ENCODE measurements at regions of chr4 and their contacts with region 1.

Region 1: GRCh38 chr4:41857226-41857641 is 78.0 kb upstream of the TMEM33 start:
- DNase-seq: peak; percentile 69
- H3K4me3 ChIP-seq: no peak overlapping the region
- H3K27ac ChIP-seq: peak overlapping the region in 1 of 2 experiments; percentile 100; a peak in 2 of 4 replicates
- H3K4me1 ChIP-seq: peaks cover 0 to 27% of the 10 kb centered on the region in 2 experiments; a peak in 2 of 4 replicates
- H3K27me3 ChIP-seq: peaks cover 14% of the 10 kb centered on the region; the same call in 1 of the 2 replicates
- CTCF ChIP-seq: no peak
- EP300 ChIP-seq: peak; percentile 4 to 98; a peak in 3 of 4 replicates
- RAD21 ChIP-seq: peak; percentile 32

Region 2: GRCh38 chr4:41784191-41784979 is 72.8 kb before region 1 on chr4:
- CTCF ChIA-PET with region 1: interaction called, 3 read pairs
- POLR2A ChIA-PET with region 1: interaction called, 10 read pairs
- DNase-seq: peak; percentile 62
- H3K4me3 ChIP-seq: no peak overlapping the region; a peak in 1 of 4 replicates
- H3K27ac ChIP-seq: peak overlapping the region in 1 of 2 experiments; percentile 98; a peak in 2 of 4 replicates
- H3K4me1 ChIP-seq: peaks cover 0 to 24% of the 10 kb centered on the region in 2 experiments; a peak in 2 of 4 replicates
- H3K27me3 ChIP-seq: no peaks in the 10 kb centered on the region
- CTCF ChIP-seq: no peak
- EP300 ChIP-seq: peak in 1 of 2 experiments; percentile 83; a peak in 2 of 4 replicates
- RAD21 ChIP-seq: no peak

Region 3: DNA sequence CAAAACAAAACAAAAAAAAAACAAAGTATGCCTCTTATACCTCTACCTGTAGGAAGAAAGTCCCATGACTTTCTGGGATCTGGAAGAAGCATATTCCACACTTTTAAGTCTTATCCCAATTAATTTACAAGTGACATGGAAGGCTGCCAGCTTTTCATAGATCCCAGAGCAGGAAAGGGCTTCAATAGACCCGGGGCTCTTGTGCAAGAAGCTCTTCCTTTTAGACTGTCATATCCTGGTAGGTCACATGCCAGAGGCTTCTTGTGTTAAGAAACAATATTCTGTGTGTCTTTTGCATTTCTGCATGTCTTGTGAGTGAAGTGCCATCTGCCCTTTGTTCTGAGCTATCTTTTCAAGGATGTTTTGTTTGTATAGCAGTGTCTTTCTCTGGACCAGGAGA is 24.3 kb before region 1 on chr4:
- CTCF ChIA-PET with region 1: no interaction called
- POLR2A ChIA-PET with region 1: interaction called, 12 read pairs
- DNase-seq: no peak
- H3K4me3 ChIP-seq: no peak overlapping the region
- H3K27ac ChIP-seq: peak overlapping the region in 1 of 2 experiments; percentile 88; a peak in 2 of 4 replicates
- H3K4me1 ChIP-seq: peaks cover 0 to 11% of the 10 kb centered on the region in 2 experiments; a peak in 2 of 4 replicates
- H3K27me3 ChIP-seq: no peaks in the 10 kb centered on the region
- CTCF ChIP-seq: no peak
- EP300 ChIP-seq: no peak
- RAD21 ChIP-seq: no peak

Region 4: GRCh38 chr4:41839916-41840854 is 17.0 kb before region 1 on chr4:
- CTCF ChIA-PET with region 1: interaction called, 4 read pairs
- POLR2A ChIA-PET with region 1: interaction called, 12 read pairs
- DNase-seq: no peak
- H3K4me3 ChIP-seq: no peak overlapping the region
- H3K27ac ChIP-seq: no peak overlapping the region
- H3K4me1 ChIP-seq: peaks cover 0 to 18% of the 10 kb centered on the region in 2 experiments; a peak in 2 of 4 replicates
- H3K27me3 ChIP-seq: no peaks in the 10 kb centered on the region
- CTCF ChIP-seq: no peak
- EP300 ChIP-seq: no peak
- RAD21 ChIP-seq: no peak